Caco-2 (cell line): ENCODE measurements at regions of chr7 and their contacts with region 1.

Region 1: GRCh38 chr7:7516156-7516555 is 19.5 kb downstream of the COL28A1 start:
- DNase-seq: peak in 1 of 2 experiments; percentile 26
- H3K4me3 ChIP-seq: no peak overlapping the region
- H3K4me3 Mint-ChIP-seq: no peak overlapping the region
- H3K27ac Mint-ChIP-seq: no peak overlapping the region
- H3K4me1 ChIP-seq: peaks cover 32% of the 10 kb centered on the region
- H3K4me1 Mint-ChIP-seq: peaks cover 8% of the 10 kb centered on the region
- H3K27me3 ChIP-seq: no peaks in the 10 kb centered on the region
- H3K27me3 Mint-ChIP-seq: no peaks in the 10 kb centered on the region
- CTCF ChIP-seq: no peak

Region 2: GRCh38 chr7:7265081-7265686 is 251.0 kb before region 1 on chr7:
- CTCF ChIA-PET with region 1: no interaction called
- POLR2A ChIA-PET with region 1: no interaction called
- intact Hi-C with region 1: no loop called
- DNase-seq: no peak
- H3K4me3 ChIP-seq: no peak overlapping the region
- H3K4me3 Mint-ChIP-seq: no peak overlapping the region
- H3K27ac Mint-ChIP-seq: peak overlapping the region; percentile 97
- H3K4me1 ChIP-seq: peaks cover 58% of the 10 kb centered on the region
- H3K4me1 Mint-ChIP-seq: peaks cover 41% of the 10 kb centered on the region
- H3K27me3 ChIP-seq: no peaks in the 10 kb centered on the region; the same call in 1 of the 2 replicates
- H3K27me3 Mint-ChIP-seq: no peaks in the 10 kb centered on the region
- CTCF ChIP-seq: no peak

Region 3: DNA sequence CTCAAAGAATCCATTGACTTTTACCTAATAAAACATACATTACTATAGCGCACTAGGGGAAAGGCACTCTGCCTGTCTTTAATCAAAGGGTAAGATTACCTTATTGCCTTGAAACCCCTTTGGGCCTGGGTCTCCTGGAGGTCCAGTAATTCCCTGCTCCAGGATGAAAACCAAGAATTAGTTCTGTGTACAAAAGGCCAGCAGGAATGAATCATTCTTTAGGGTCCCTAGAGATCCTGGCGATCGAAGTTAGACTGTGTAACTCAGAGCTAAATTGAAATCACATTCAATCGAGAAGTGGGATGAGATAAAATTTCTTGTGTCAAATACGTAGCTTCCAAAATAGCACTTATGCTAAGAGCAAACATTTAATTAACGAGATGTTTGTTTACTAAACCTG is 10.2 kb before region 1 on chr7:
- CTCF ChIA-PET with region 1: no interaction called
- POLR2A ChIA-PET with region 1: no interaction called
- intact Hi-C with region 1: loop called (anchors 1 kb)
- DNase-seq: no peak
- H3K4me3 ChIP-seq: no peak overlapping the region
- H3K4me3 Mint-ChIP-seq: no peak overlapping the region
- H3K27ac Mint-ChIP-seq: no peak overlapping the region
- H3K4me1 ChIP-seq: peaks cover 20% of the 10 kb centered on the region
- H3K4me1 Mint-ChIP-seq: no peaks in the 10 kb centered on the region
- H3K27me3 ChIP-seq: no peaks in the 10 kb centered on the region
- H3K27me3 Mint-ChIP-seq: no peaks in the 10 kb centered on the region
- CTCF ChIP-seq: no peak

Region 4: GRCh38 chr7:7617550-7617949 is 101.4 kb after region 1 on chr7:
- CTCF ChIA-PET with region 1: no interaction called
- POLR2A ChIA-PET with region 1: no interaction called
- intact Hi-C with region 1: no loop called
- DNase-seq: no peak
- H3K4me3 ChIP-seq: no peak overlapping the region
- H3K4me3 Mint-ChIP-seq: no peak overlapping the region
- H3K27ac Mint-ChIP-seq: no peak overlapping the region
- H3K4me1 ChIP-seq: no peaks in the 10 kb centered on the region
- H3K4me1 Mint-ChIP-seq: no peaks in the 10 kb centered on the region
- H3K27me3 ChIP-seq: no peaks in the 10 kb centered on the region
- H3K27me3 Mint-ChIP-seq: no peaks in the 10 kb centered on the region
- CTCF ChIP-seq: no peak